Ascending aorta (tissue), 2 donors: ENCODE measurements at regions of chr15 and their contacts with region 1.

Region 1: DNA sequence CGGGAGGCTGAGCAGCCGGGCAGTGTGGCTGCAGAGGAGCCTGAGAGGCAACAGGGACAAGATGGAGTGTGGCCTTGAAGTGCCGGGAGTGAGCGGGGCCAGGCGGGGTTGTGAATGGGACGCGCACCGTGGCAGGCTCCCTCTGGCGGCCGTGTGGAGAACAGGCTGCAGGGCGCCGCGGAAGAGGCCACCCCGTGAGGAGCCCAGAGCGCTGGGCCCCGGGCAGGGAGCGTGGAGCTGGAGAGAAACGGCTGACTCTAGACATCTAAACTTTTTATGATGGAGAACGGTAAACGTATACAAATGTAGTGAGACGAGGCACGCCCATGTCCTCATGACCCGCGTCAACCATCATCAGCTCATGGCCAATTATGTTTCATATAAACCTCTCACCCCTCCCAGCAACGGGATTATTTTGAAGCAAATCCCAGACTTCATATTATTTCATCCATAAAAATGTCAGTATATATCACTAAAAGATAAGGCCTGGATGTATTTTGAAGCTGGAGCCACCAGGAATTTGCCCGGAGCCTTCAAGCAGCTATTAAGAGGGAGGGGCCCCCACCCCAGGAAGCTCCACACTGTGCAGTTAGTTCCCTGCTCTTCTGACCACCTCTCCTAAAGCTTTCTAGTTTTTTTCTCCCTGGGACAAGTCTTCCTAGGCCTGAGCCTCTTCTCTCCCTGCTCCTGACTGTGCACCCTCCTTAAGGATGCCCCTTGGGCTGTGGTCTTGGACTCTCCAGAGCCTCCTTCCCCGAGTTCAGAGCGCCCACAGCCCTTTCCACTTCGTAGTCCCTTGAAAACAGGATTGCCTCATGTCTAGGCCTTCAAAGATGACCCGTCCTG is 149.4 kb downstream of the SMAD6 start:
- DNase-seq: peak in 1 of 2 donors; percentile 93
- H3K4me3 ChIP-seq: peak overlapping the region in 1 of 2 donors; percentile 1
- H3K27ac ChIP-seq: peak overlapping the region; percentile 91 to 94
- H3K4me1 ChIP-seq: peaks cover 19 to 32% of the 10 kb centered on the region in 2 donors
- H3K27me3 ChIP-seq: no peaks in the 10 kb centered on the region
- CTCF ChIP-seq: peak; percentile 97

Region 2: GRCh38 chr15:66504563-66505429 is 346.7 kb before region 1 on chr15 and contains the starts of genes RPL4 and ZWILCH:
- intact Hi-C with region 1: loop called (anchors 10 kb)
- DNase-seq: peak; percentile 22 to 89
- H3K4me3 ChIP-seq: peak within 1 kb of the TSS; percentile 82 to 87
- H3K27ac ChIP-seq: peak within 1 kb of the TSS; percentile 93 to 96
- H3K4me1 ChIP-seq: peaks cover 9 to 21% of the 10 kb centered on the region in 2 donors
- H3K27me3 ChIP-seq: no peaks in the 10 kb centered on the region
- CTCF ChIP-seq: no peak
- total RNA-seq, gene RPL4: 2,799 TPM
- total RNA-seq, gene ZWILCH: 2.3 TPM

Region 3: GRCh38 chr15:66619151-66619903 is 232.1 kb before region 1 on chr15:
- intact Hi-C with region 1: loop called (anchors 1 kb)
- DNase-seq: peak in 1 of 2 donors; percentile 89
- H3K4me3 ChIP-seq: no peak overlapping the region
- H3K27ac ChIP-seq: peak overlapping the region; percentile 94
- H3K4me1 ChIP-seq: peaks cover 25 to 46% of the 10 kb centered on the region in 2 donors
- H3K27me3 ChIP-seq: no peaks in the 10 kb centered on the region
- CTCF ChIP-seq: peak; percentile 85 to 96 (median 92)

Region 4: DNA sequence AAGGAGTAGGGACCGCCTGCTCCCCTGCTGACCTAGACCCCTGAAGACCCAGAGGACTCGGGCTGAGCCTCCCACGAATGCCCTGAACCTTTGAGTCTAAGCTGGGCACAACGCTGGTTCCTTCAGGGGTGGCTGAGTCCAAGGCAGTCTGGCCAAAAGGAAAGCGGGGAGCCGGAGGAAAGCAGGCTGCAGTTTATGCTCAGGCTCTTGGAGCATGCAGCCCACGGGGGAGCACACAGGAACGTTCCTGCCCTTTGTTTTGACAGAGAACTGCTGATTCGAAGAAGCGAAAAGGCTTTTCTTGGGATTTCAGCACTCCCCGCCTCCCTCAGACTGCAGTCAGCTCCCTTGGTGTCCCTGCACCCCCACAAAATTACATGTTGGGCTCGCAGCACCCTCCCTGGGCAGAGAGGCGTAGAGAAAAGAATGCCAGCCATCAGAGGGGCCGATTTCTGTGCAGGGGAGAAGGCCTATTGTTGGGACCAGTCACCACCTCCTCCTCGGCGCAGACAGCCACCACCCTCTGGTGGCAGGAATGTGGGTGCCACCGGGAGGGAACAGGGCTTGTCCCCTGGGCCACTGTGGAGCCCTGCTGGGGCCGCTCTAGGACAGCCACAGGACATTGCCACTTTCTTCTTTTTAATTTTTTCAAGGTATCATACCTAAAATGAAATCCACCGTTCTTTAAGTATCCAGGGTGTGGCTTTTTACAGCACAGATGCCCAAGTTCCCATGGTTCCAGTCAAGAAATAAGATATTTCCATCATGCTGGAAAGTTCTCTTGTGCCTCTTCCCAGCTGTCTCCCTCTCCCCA is 77.2 kb before region 1 on chr15:
- intact Hi-C with region 1: loop called (anchors 1 kb)
- DNase-seq: peak; percentile 44 to 95
- H3K4me3 ChIP-seq: no peak overlapping the region
- H3K27ac ChIP-seq: peak overlapping the region; percentile 75 to 77
- H3K4me1 ChIP-seq: peaks cover 14 to 47% of the 10 kb centered on the region in 2 donors
- H3K27me3 ChIP-seq: no peaks in the 10 kb centered on the region
- CTCF ChIP-seq: peak; percentile 96 to 99 (median 99)